Right ventricle myocardium superior (tissue), 1 donor: ENCODE measurements at regions of chr22 and their contacts with region 1.

Region 1: GRCh38 chr22:29689880-29690213 is 30.0 kb upstream of the CABP7 start:
- DNase-seq: peak; percentile 72
- ATAC-seq: peak; percentile 81

Region 2: GRCh38 chr22:30005213-30005857 is 315.5 kb after region 1 on chr22:
- intact Hi-C with region 1: loop called (anchors 10 kb)
- DNase-seq: peak; percentile 80
- ATAC-seq: peak; percentile 90

Region 3: GRCh38 chr22:30079952-30080533 is 390.2 kb after region 1 on chr22 and contains the start of gene HORMAD2:
- intact Hi-C with region 1: loop called (anchors 10 kb)
- DNase-seq: peak; percentile 48
- ATAC-seq: no peak
- total RNA-seq, gene HORMAD2: not detected